CD14-positive monocyte (primary cell): ENCODE measurements at regions of chr5 and their contacts with region 1.

Region 1: GRCh38 chr5:177497292-177498033 is at the start of gene PDLIM7:
- DNase-seq: peak; percentile 97 to 98 (median 97)
- H3K4me3 ChIP-seq: peak within 1 kb of the TSS; percentile 70 to 84 (median 81)
- H3K4me3 Mint-ChIP-seq: peak within 1 kb of the TSS; percentile 78 to 88
- H3K27ac ChIP-seq: peak within 1 kb of the TSS; percentile 37 to 98
- H3K27ac Mint-ChIP-seq: peak within 1 kb of the TSS; percentile 90 to 99 (median 98)
- H3K4me1 ChIP-seq: peaks cover 75 to 78% of the 10 kb centered on the region in 2 donors
- H3K4me1 Mint-ChIP-seq: peaks cover 72% of the 10 kb centered on the region
- H3K27me3 ChIP-seq: peaks cover 0 to 17% of the 10 kb centered on the region in 2 donors
- H3K27me3 Mint-ChIP-seq: peaks cover 19 to 30% (median 21%) of the 10 kb centered on the region in 3 donors
- CTCF ChIP-seq: no peak
- polyA plus RNA-seq, gene PDLIM7: 21.6 to 126 (median 27.2) TPM

Region 2: GRCh38 chr5:177311723-177312648 is 185.5 kb before region 1 on chr5 and contains the start of gene MXD3:
- intact Hi-C with region 1: loop called (anchors 5 to 10 kb)
- DNase-seq: peak; percentile 90 to 95 (median 90)
- H3K4me3 ChIP-seq: peak within 1 kb of the TSS; percentile 40 to 97 (median 68)
- H3K4me3 Mint-ChIP-seq: peak within 1 kb of the TSS; percentile 89 to 98
- H3K27ac ChIP-seq: peak within 1 kb of the TSS; percentile 44 to 68
- H3K27ac Mint-ChIP-seq: peak within 1 kb of the TSS; percentile 73 to 95 (median 85)
- H3K4me1 ChIP-seq: peaks cover 63 to 72% of the 10 kb centered on the region in 2 donors
- H3K4me1 Mint-ChIP-seq: peaks cover 61% of the 10 kb centered on the region
- H3K27me3 ChIP-seq: no peaks in the 10 kb centered on the region
- H3K27me3 Mint-ChIP-seq: peaks cover 0 to 3% (median 0%) of the 10 kb centered on the region in 3 donors
- CTCF ChIP-seq: no peak
- polyA plus RNA-seq, gene MXD3: 21.5 to 61.9 (median 25.5) TPM

Region 3: GRCh38 chr5:177403792-177404640 is 93.4 kb before region 1 on chr5:
- intact Hi-C with region 1: loop called in 1 of 2 experiments (anchors 5 kb)
- DNase-seq: peak; percentile 90 to 92 (median 91)
- H3K4me3 ChIP-seq: peak overlapping the region; percentile 21 to 74 (median 39)
- H3K4me3 Mint-ChIP-seq: peak overlapping the region; percentile 72 to 87
- H3K27ac ChIP-seq: no peak overlapping the region
- H3K27ac Mint-ChIP-seq: peak overlapping the region in 5 of 7 donors; percentile 33 to 80 (median 53)
- H3K4me1 ChIP-seq: peaks cover 45 to 46% of the 10 kb centered on the region in 2 donors
- H3K4me1 Mint-ChIP-seq: peaks cover 40% of the 10 kb centered on the region
- H3K27me3 ChIP-seq: peaks cover 26 to 43% of the 10 kb centered on the region in 2 donors
- H3K27me3 Mint-ChIP-seq: peaks cover 38 to 57% (median 51%) of the 10 kb centered on the region in 3 donors
- CTCF ChIP-seq: peak; percentile 76

Region 4: GRCh38 chr5:177454397-177455035 is 42.9 kb before region 1 on chr5:
- intact Hi-C with region 1: loop called (anchors 2 to 5 kb)
- DNase-seq: peak; percentile 91 to 95 (median 95)
- H3K4me3 ChIP-seq: peak overlapping the region; percentile 32 to 77 (median 35)
- H3K4me3 Mint-ChIP-seq: peak overlapping the region; percentile 73 to 85
- H3K27ac ChIP-seq: peak overlapping the region in 1 of 2 donors; percentile 51
- H3K27ac Mint-ChIP-seq: peak overlapping the region in 3 of 7 donors; percentile 58 to 65 (median 63)
- H3K4me1 ChIP-seq: peaks cover 36 to 43% of the 10 kb centered on the region in 2 donors
- H3K4me1 Mint-ChIP-seq: peaks cover 25% of the 10 kb centered on the region
- H3K27me3 ChIP-seq: peaks cover 0 to 37% of the 10 kb centered on the region in 2 donors
- H3K27me3 Mint-ChIP-seq: peaks cover 37 to 51% (median 42%) of the 10 kb centered on the region in 3 donors
- CTCF ChIP-seq: peak; percentile 85

Region 5: DNA sequence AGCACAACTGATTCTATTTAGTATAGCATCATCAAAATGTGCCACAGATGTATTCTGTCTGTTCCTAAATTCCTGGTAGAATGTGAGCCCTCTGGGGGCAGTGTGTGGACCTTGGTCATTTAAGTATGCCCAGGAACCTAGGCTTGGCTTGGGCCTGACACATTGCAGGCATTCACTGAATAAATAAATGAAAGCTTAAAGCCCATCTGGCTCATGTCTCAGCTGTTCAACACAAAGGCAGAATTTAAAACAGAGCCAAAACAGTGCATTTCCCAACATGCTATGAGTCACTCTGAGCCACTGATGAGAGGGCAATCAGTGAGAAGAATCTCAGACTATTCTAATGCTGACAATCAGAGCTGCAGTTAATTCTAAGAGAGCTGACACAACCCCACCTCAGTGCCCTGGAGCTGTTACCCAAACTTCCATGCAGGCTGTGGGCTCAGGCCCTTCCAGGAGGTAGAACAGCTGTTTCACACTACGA is 48.8 kb after region 1 on chr5:
- intact Hi-C with region 1: loop called in 1 of 2 experiments (anchors 10 kb)
- DNase-seq: peak; percentile 82 to 94 (median 91)
- H3K4me3 ChIP-seq: peak overlapping the region in 1 of 3 experiments; percentile 43
- H3K4me3 Mint-ChIP-seq: peak overlapping the region in 1 of 2 donors; percentile 69
- H3K27ac ChIP-seq: peak overlapping the region; percentile 69 to 97
- H3K27ac Mint-ChIP-seq: peak overlapping the region; percentile 95 to 99 (median 98)
- H3K4me1 ChIP-seq: peaks cover 37 to 44% of the 10 kb centered on the region in 2 donors
- H3K4me1 Mint-ChIP-seq: peaks cover 43% of the 10 kb centered on the region
- H3K27me3 ChIP-seq: no peaks in the 10 kb centered on the region
- H3K27me3 Mint-ChIP-seq: peaks cover 0 to 1% (median 0%) of the 10 kb centered on the region in 3 donors
- CTCF ChIP-seq: no peak

Region 6: DNA sequence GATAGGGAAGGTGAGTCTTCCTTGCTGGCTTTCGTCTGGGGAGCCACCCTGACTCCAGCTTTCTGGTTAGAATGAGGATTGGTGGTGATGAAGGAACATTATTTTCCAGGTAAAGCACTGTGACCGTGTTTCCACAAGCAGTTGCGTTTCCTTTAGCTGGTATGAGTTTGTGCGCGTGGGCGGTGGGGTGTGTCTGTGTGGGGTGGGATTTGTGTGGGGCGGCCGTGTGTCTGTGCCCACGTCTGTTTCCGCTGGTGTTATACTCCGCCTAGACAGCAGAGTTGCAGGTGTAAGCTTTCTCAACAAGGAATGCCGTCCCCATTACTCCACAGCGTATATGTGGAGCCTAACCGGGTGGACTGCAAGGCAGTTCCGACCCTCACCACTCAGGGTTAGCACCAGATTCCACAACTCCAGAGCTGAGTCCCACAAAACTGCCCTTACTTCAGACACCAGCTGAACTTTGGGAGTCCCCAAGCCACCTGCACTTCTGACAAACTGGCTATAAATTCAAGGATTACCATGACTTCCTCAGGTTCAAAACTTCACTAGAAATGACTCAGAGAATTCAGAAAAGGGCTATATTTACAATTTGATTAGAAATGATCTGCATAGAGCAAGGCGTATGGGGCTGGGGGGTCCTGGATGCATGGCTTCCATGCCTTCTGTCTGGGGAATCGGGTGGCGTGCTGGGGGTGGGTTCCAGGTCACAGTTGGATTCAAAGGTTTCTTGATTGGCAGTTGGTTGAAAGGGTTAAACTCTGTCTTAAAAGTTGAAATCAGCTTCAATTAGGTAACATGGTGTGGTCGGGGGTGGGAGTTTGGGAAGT is 468.8 kb after region 1 on chr5:
- intact Hi-C with region 1: no loop called
- DNase-seq: no peak
- H3K4me3 ChIP-seq: no peak overlapping the region
- H3K4me3 Mint-ChIP-seq: peak overlapping the region in 1 of 2 donors; percentile 32
- H3K27ac ChIP-seq: no peak overlapping the region
- H3K27ac Mint-ChIP-seq: no peak overlapping the region
- H3K4me1 ChIP-seq: no peaks in the 10 kb centered on the region
- H3K4me1 Mint-ChIP-seq: no peaks in the 10 kb centered on the region
- H3K27me3 ChIP-seq: peaks cover 2 to 3% of the 10 kb centered on the region in 2 donors
- H3K27me3 Mint-ChIP-seq: peaks cover 16 to 25% (median 16%) of the 10 kb centered on the region in 3 donors
- CTCF ChIP-seq: no peak

Region 7: DNA sequence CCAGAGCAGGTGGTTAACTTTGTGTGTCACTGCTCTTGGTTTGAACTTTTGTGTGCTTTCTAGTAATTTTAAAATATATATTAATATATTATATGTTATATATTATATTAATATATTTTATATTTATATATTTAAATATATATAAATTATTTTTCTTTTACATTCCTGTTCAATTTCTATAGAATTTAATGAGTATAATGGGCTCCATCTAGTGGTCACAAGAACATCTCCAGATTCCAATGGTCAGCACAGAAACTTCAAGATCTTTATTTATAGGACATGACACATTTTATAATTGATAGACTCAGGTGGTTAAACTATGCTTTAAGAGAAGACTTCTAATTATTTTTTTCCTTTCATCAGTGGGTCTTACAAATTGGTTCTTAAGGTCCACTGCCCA is 1053.6 kb after region 1 on chr5:
- intact Hi-C with region 1: no loop called
- DNase-seq: peak in 2 of 3 donors; percentile 29 to 42
- H3K4me3 ChIP-seq: no peak overlapping the region
- H3K4me3 Mint-ChIP-seq: no peak overlapping the region
- H3K27ac ChIP-seq: no peak overlapping the region
- H3K27ac Mint-ChIP-seq: no peak overlapping the region
- H3K4me1 ChIP-seq: peaks cover 2% of the 10 kb centered on the region in 2 donors
- H3K4me1 Mint-ChIP-seq: peaks cover 10% of the 10 kb centered on the region
- H3K27me3 ChIP-seq: no peaks in the 10 kb centered on the region
- H3K27me3 Mint-ChIP-seq: peaks cover 1 to 4% (median 2%) of the 10 kb centered on the region in 3 donors
- CTCF ChIP-seq: peak; percentile 66